ENCODE measurements at regions of chr3 and their contacts with region 1.

Region 1: GRCh38 chr3:4712143-4712542 is 219.0 kb downstream of the ITPR1 start:
- DNase-seq: peak in 2 of 4 donors; percentile 81
- ATAC-seq: peak; percentile 82
- H3K4me3 ChIP-seq: no peak overlapping the region
- H3K27ac ChIP-seq: peak overlapping the region; percentile 68 to 76
- H3K4me1 ChIP-seq: peaks cover 0 to 16% of the 10 kb centered on the region in 2 donors
- H3K27me3 ChIP-seq: no peaks in the 10 kb centered on the region
- CTCF ChIP-seq: no peak

Region 2: GRCh38 chr3:4759689-4760312 is 47.7 kb after region 1 on chr3:
- intact Hi-C with region 1: no loop called
- DNase-seq: no peak
- ATAC-seq: no peak
- H3K4me3 ChIP-seq: no peak overlapping the region
- H3K27ac ChIP-seq: no peak overlapping the region
- H3K4me1 ChIP-seq: peaks cover 0 to 12% of the 10 kb centered on the region in 2 donors
- H3K27me3 ChIP-seq: no peaks in the 10 kb centered on the region
- CTCF ChIP-seq: no peak

Region 3: DNA sequence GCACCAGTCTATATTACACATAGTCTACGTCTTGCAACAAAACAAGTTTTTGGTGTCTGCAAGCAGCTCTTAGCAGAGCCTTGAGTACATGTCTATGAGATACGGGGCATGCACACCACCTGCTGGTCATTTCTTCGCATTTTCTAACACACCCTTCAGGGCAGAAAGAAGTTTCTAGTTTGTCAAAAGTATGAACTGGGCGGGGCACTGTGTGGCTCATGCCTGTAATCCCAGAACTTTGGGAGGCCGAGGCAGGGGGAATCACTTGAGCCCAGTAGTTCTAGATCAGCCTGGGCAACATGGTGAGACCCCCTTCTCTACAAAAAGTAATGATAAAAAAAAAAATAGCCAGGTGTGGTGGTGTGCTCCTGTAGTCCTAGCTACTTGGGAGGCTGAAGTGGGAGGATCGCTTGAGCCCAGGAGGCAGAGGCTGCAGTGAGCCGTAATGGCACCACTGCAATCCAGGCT is 345.7 kb after region 1 on chr3:
- intact Hi-C with region 1: loop called in 1 of 2 experiments (anchors 5 kb)
- DNase-seq: peak in 3 of 4 donors; percentile 54 to 83 (median 81)
- ATAC-seq: peak; percentile 93
- H3K4me3 ChIP-seq: no peak overlapping the region
- H3K27ac ChIP-seq: peak overlapping the region in 1 of 2 donors; percentile 29
- H3K4me1 ChIP-seq: peaks cover 7 to 53% of the 10 kb centered on the region in 2 donors
- H3K27me3 ChIP-seq: no peaks in the 10 kb centered on the region
- CTCF ChIP-seq: peak; percentile 60 to 82

Measured in left lung (tissue), 14 donors.